ENCODE measurements at regions of chr3 and their contacts with region 1.

Region 1: GRCh38 chr3:115418583-115418982 is 204.7 kb upstream of the GAP43 start:
- DNase-seq: no peak
- H3K4me3 Mint-ChIP-seq: no peak overlapping the region
- H3K27ac Mint-ChIP-seq: no peak overlapping the region
- H3K4me1 Mint-ChIP-seq: peaks cover 8% of the 10 kb centered on the region
- H3K27me3 Mint-ChIP-seq: peaks cover 28% of the 10 kb centered on the region
- CTCF ChIP-seq: no peak

Region 2: GRCh38 chr3:115325539-115325938 is 93.0 kb before region 1 on chr3:
- CTCF ChIA-PET with region 1: no interaction called
- intact Hi-C with region 1: no loop called
- DNase-seq: peak; percentile 38
- H3K4me3 Mint-ChIP-seq: no peak overlapping the region
- H3K27ac Mint-ChIP-seq: no peak overlapping the region
- H3K4me1 Mint-ChIP-seq: no peaks in the 10 kb centered on the region
- H3K27me3 Mint-ChIP-seq: peaks cover 22% of the 10 kb centered on the region
- CTCF ChIP-seq: no peak

Region 3: GRCh38 chr3:115369021-115369420 is 49.6 kb before region 1 on chr3:
- CTCF ChIA-PET with region 1: no interaction called
- intact Hi-C with region 1: loop called (anchors 5 kb)
- DNase-seq: no peak
- H3K4me3 Mint-ChIP-seq: no peak overlapping the region
- H3K27ac Mint-ChIP-seq: no peak overlapping the region
- H3K4me1 Mint-ChIP-seq: peaks cover 4% of the 10 kb centered on the region
- H3K27me3 Mint-ChIP-seq: no peaks in the 10 kb centered on the region
- CTCF ChIP-seq: no peak

Region 4: GRCh38 chr3:115960799-115961198 is 542.2 kb after region 1 on chr3:
- CTCF ChIA-PET with region 1: no interaction called
- intact Hi-C with region 1: no loop called
- DNase-seq: no peak
- H3K4me3 Mint-ChIP-seq: no peak overlapping the region
- H3K27ac Mint-ChIP-seq: no peak overlapping the region
- H3K4me1 Mint-ChIP-seq: no peaks in the 10 kb centered on the region
- H3K27me3 Mint-ChIP-seq: no peaks in the 10 kb centered on the region
- CTCF ChIP-seq: no peak

Measured in Calu3 (cell line).